OCI-LY7 (cell line): ENCODE measurements at regions of chr6 and their contacts with region 1.

Region 1: DNA sequence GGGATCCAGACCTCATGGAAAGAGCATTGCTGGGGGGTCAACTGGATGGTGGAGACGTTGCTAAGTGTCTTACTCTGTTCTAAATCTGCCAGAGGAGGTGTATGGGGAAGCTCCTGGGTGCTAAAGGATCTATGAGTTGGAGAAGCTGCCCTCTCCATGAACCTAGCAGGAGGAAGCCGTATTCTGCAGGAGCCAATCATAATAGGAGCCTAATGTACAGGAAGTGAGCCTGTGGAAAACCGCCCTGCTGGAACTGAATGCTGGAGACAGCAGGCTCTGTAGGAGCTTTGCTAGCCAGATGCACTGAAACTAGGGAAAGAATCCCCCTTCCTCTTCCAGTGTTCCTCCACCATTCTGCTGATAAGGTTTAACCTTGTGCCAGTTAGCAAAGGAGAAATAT is 10.9 kb downstream of the CASP8AP2 start:
- DNase-seq: no peak
- H3K4me3 ChIP-seq: no peak overlapping the region
- H3K27ac ChIP-seq: no peak overlapping the region
- H3K4me1 ChIP-seq: peaks cover 9% of the 10 kb centered on the region
- CTCF ChIP-seq: no peak

Region 2: DNA sequence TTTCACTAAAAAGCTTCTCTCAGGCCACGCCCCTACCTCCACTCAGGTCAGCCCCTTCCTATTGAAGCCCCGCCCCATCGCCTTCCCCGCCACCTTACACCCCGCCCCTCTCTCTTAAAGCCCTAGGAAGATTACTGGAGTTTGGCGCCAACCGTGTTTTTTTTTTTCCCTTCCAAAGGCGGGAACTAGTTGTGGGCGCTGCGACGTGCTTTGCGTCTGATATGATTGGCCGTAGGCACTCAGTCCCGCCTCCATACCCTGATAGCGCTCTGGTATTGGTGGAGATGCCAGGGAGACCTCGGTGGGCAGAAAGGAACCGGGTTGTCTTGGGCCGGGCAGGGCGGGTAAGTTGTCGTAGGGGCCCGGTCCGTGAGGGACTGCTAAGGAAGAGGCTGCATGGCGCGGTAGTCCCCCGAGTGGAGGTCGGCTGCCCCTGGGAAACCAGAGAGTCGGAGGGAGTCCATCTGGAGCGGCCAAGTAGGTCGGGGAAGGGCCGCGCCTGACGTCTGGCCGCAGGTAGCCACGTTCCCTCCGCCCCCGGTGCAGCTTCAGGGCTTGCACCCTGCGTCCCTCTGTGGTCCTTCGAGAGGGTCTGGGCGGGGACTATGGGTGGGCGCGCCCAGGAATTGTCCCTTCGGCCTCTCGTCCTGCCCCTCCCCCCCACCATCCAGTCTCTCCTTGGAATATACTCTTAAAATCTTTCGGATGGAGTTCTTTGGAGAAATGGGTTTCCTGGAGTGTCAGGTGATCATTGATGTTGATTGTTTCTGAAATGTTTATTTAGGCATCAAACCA is 10.8 kb before region 1 on chr6 and contains the start of gene CASP8AP2:
- CTCF ChIA-PET with region 1: interaction called, 5 read pairs
- POLR2A ChIA-PET with region 1: interaction called, 15 read pairs
- intact Hi-C with region 1: no loop called
- DNase-seq: peak; percentile 99
- H3K4me3 ChIP-seq: peak within 1 kb of the TSS; percentile 86
- H3K27ac ChIP-seq: peak within 1 kb of the TSS; percentile 79
- H3K4me1 ChIP-seq: peaks cover 13% of the 10 kb centered on the region
- CTCF ChIP-seq: no peak
- total RNA-seq, gene CASP8AP2: 22.6 and 23.7 TPM in 2 replicates